CD8-positive, alpha-beta T cell (primary cell): ENCODE measurements at regions of chr15 and their contacts with region 1.

Region 1: GRCh38 chr15:92881802-92882696 is 18.1 kb upstream of the CHD2 start:
- DNase-seq: peak; percentile 97 to 99 (median 98)
- ATAC-seq: peak; percentile 83
- H3K4me3 ChIP-seq: peak overlapping the region; percentile 51 to 52
- H3K4me3 Mint-ChIP-seq: peak overlapping the region; percentile 87
- H3K27ac ChIP-seq: peak overlapping the region; percentile 80 to 84
- H3K27ac Mint-ChIP-seq: peak overlapping the region; percentile 99
- H3K4me1 ChIP-seq: peaks cover 49% of the 10 kb centered on the region
- H3K4me1 Mint-ChIP-seq: peaks cover 66% of the 10 kb centered on the region
- H3K27me3 ChIP-seq: no peaks in the 10 kb centered on the region
- H3K27me3 Mint-ChIP-seq: no peaks in the 10 kb centered on the region
- CTCF ChIP-seq: no peak

Region 2: GRCh38 chr15:92820236-92821021 is 61.6 kb before region 1 on chr15:
- CTCF ChIA-PET with region 1: interaction called, 15 read pairs
- POLR2A ChIA-PET with region 1: interaction called, 74 read pairs
- intact Hi-C with region 1: loop called in 1 of 2 experiments (anchors 1 kb)
- DNase-seq: peak; percentile 64 to 94 (median 85)
- ATAC-seq: peak; percentile 88
- H3K4me3 ChIP-seq: peak overlapping the region; percentile 57 to 64
- H3K4me3 Mint-ChIP-seq: peak overlapping the region; percentile 87
- H3K27ac ChIP-seq: peak overlapping the region; percentile 69 to 75
- H3K27ac Mint-ChIP-seq: peak overlapping the region; percentile 94
- H3K4me1 ChIP-seq: peaks cover 47% of the 10 kb centered on the region
- H3K4me1 Mint-ChIP-seq: peaks cover 52% of the 10 kb centered on the region
- H3K27me3 ChIP-seq: no peaks in the 10 kb centered on the region
- H3K27me3 Mint-ChIP-seq: no peaks in the 10 kb centered on the region
- CTCF ChIP-seq: no peak

Region 3: GRCh38 chr15:92839696-92840095 is 42.4 kb before region 1 on chr15:
- CTCF ChIA-PET with region 1: no interaction called
- POLR2A ChIA-PET with region 1: interaction called, 19 read pairs
- intact Hi-C with region 1: no loop called
- DNase-seq: no peak
- ATAC-seq: no peak
- H3K4me3 ChIP-seq: peak overlapping the region in 1 of 2 experiments; percentile 31
- H3K4me3 Mint-ChIP-seq: peak overlapping the region; percentile 44
- H3K27ac ChIP-seq: peak overlapping the region; percentile 9 to 48
- H3K27ac Mint-ChIP-seq: peak overlapping the region; percentile 56
- H3K4me1 ChIP-seq: peaks cover 50% of the 10 kb centered on the region
- H3K4me1 Mint-ChIP-seq: peaks cover 52% of the 10 kb centered on the region
- H3K27me3 ChIP-seq: no peaks in the 10 kb centered on the region
- H3K27me3 Mint-ChIP-seq: no peaks in the 10 kb centered on the region
- CTCF ChIP-seq: no peak

Region 4: DNA sequence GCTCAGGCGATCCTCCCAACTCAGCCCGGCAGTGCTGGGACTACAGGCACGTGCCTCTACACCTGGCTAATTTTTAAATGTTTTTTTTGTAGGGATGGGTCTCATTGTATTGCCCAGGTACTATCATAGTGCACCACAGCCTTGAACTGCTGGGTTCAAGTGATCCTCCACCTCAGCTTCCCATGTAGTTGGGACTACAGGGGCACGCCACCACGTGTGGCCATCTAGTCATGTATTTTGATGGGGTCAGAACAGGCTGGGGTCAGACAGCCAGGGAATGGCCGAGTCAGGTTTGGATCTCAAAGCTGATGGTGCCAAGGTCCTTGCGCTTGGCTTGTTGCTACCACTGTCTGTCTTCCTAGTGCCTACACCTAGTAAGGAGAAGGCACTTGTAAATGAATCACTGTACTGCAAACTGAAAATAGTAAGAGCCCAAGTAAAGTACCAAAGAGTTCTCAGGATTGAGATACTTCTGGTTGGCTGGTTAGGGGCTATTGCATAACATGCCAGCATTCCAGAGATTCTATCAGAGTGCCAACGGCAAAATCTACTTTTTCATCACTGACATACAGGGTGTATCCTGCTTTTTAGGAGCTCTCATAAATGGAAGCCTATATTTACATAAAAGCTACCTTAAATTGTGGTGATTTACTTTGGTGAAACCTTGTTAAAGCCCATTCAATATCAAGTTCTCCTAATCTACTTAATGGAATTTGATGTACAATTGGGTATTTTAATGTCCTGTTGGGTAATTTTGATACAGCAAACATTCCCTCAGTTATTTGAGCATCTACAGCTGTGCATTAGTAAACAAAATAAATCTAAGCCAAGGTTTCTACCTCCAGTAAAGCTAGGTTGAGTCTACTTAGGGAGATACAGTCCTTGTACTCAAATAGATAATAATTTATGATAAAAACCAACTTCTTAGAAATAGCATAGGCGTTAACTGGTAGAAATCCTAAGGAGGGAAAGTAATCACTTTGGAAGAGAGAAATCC is 12.8 kb before region 1 on chr15:
- CTCF ChIA-PET with region 1: interaction called, 3 read pairs
- POLR2A ChIA-PET with region 1: interaction called, 10 read pairs
- intact Hi-C with region 1: no loop called
- DNase-seq: no peak
- ATAC-seq: no peak
- H3K4me3 ChIP-seq: no peak overlapping the region
- H3K4me3 Mint-ChIP-seq: no peak overlapping the region
- H3K27ac ChIP-seq: no peak overlapping the region
- H3K27ac Mint-ChIP-seq: no peak overlapping the region
- H3K4me1 ChIP-seq: no peaks in the 10 kb centered on the region
- H3K4me1 Mint-ChIP-seq: peaks cover 6% of the 10 kb centered on the region
- H3K27me3 ChIP-seq: no peaks in the 10 kb centered on the region
- H3K27me3 Mint-ChIP-seq: no peaks in the 10 kb centered on the region
- CTCF ChIP-seq: no peak

Region 5: GRCh38 chr15:92903941-92904831 is 22.1 kb after region 1 on chr15:
- CTCF ChIA-PET with region 1: interaction called, 12 read pairs
- POLR2A ChIA-PET with region 1: interaction called, 319 read pairs
- intact Hi-C with region 1: loop called (anchors 1 kb)
- DNase-seq: peak; percentile 98 to 99 (median 99)
- ATAC-seq: peak; percentile 77
- H3K4me3 ChIP-seq: peak overlapping the region; percentile 75 to 88
- H3K4me3 Mint-ChIP-seq: peak overlapping the region; percentile 94
- H3K27ac ChIP-seq: peak overlapping the region; percentile 95 to 99
- H3K27ac Mint-ChIP-seq: peak overlapping the region; percentile 99
- H3K4me1 ChIP-seq: peaks cover 60% of the 10 kb centered on the region
- H3K4me1 Mint-ChIP-seq: peaks cover 58% of the 10 kb centered on the region
- H3K27me3 ChIP-seq: no peaks in the 10 kb centered on the region
- H3K27me3 Mint-ChIP-seq: no peaks in the 10 kb centered on the region
- CTCF ChIP-seq: no peak

Region 6: DNA sequence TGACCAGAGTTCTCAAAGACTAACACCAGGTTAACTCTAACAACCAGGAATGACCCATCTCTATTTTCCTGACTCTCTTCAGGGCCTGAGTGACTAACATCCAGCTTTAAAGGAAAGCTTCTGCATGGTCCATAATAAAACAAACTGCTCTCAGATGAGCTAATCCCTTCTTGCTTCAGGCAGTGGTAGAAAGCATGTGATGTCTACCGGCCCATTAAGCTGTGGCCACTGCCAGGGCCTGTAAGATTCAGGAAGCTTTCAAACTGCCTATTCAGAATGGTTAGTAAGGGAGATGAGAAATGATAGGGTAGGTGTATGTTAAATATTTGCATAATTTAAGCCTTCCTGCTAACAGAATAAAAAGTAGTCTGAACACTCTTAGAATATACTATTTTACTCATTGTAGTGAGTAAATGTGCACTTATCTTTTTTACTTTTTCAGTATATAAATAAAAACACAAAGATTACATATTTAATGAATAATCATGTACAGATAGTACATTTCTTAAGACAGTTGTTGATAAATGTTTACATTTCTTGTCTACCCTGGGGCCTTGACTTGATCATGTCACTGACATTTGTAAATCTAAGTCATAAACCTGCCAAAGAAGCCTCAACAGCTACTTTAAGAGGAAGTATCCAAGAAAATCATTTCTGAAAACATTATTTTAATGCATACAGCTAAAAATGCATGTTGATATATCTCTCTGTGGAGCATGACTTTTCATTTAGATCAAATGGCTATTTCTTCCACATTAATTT is 1571.4 kb after region 1 on chr15:
- CTCF ChIA-PET with region 1: no interaction called
- POLR2A ChIA-PET with region 1: no interaction called
- intact Hi-C with region 1: no loop called
- DNase-seq: no peak
- ATAC-seq: no peak
- H3K4me3 ChIP-seq: no peak overlapping the region
- H3K4me3 Mint-ChIP-seq: no peak overlapping the region
- H3K27ac ChIP-seq: no peak overlapping the region
- H3K27ac Mint-ChIP-seq: no peak overlapping the region
- H3K4me1 ChIP-seq: no peaks in the 10 kb centered on the region
- H3K4me1 Mint-ChIP-seq: no peaks in the 10 kb centered on the region
- H3K27me3 ChIP-seq: no peaks in the 10 kb centered on the region
- H3K27me3 Mint-ChIP-seq: no peaks in the 10 kb centered on the region
- CTCF ChIP-seq: no peak